ENCODE measurements at regions of chr18 and their contacts with region 1.

Region 1: GRCh38 chr18:11937874-11938478 is 29.9 kb upstream of the MPPE1 start:
- DNase-seq: peak; percentile 86
- ATAC-seq: peak; percentile 51
- H3K4me3 Mint-ChIP-seq: no peak overlapping the region
- H3K27ac Mint-ChIP-seq: no peak overlapping the region
- H3K4me1 Mint-ChIP-seq: no peaks in the 10 kb centered on the region
- H3K27me3 Mint-ChIP-seq: no peaks in the 10 kb centered on the region

Region 2: DNA sequence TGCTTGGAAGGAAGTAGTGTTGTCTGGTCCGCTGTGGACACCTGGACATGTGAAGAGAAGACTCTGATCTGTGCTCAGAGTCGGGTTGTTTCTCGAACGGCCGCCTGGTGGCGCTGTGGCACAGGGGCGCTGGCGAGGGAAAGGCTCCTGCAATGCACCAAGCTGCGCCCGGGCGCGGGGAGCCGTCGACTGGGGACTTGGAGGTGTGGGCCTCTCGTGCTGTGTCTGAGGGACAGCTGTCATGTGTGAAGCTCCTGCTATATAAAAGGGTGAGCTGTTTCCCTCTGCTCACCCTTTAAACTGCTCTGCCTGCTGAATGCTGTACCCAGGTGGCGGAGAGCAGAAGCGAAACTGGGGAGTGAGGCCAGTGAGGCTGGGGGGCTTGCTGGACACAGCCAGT is 204.9 kb before region 1 on chr18:
- CTCF ChIA-PET with region 1: interaction called, 4 read pairs
- POLR2A ChIA-PET with region 1: no interaction called
- intact Hi-C with region 1: loop called (anchors 1 to 10 kb)
- DNase-seq: peak; percentile 84
- ATAC-seq: peak; percentile 83
- H3K4me3 Mint-ChIP-seq: no peak overlapping the region
- H3K27ac Mint-ChIP-seq: no peak overlapping the region
- H3K4me1 Mint-ChIP-seq: no peaks in the 10 kb centered on the region
- H3K27me3 Mint-ChIP-seq: peaks cover 35% of the 10 kb centered on the region

Region 3: DNA sequence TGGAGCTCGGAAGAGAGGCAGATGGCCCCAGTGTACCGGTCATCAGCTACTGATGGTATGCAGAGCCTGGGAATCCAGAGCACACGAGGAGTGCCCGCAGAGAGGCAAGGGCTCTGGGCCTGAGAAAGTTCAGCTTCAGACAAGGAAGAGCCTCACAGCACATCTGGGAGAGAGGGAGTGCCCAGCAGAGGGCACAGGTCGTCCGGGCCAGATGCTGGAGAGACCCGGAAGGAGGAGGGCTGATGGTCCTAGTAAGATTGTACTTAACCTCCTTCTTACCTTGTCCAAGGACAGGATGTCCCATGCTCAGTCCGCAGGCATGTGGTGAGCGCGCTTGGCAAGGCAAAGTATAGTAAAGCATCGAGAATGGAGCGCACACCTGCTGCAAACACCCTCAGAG is 111.1 kb before region 1 on chr18:
- CTCF ChIA-PET with region 1: no interaction called
- POLR2A ChIA-PET with region 1: no interaction called
- intact Hi-C with region 1: no loop called
- DNase-seq: no peak
- ATAC-seq: no peak
- H3K4me3 Mint-ChIP-seq: no peak overlapping the region
- H3K27ac Mint-ChIP-seq: no peak overlapping the region
- H3K4me1 Mint-ChIP-seq: peaks cover 6% of the 10 kb centered on the region
- H3K27me3 Mint-ChIP-seq: peaks cover 3% of the 10 kb centered on the region

Region 4: DNA sequence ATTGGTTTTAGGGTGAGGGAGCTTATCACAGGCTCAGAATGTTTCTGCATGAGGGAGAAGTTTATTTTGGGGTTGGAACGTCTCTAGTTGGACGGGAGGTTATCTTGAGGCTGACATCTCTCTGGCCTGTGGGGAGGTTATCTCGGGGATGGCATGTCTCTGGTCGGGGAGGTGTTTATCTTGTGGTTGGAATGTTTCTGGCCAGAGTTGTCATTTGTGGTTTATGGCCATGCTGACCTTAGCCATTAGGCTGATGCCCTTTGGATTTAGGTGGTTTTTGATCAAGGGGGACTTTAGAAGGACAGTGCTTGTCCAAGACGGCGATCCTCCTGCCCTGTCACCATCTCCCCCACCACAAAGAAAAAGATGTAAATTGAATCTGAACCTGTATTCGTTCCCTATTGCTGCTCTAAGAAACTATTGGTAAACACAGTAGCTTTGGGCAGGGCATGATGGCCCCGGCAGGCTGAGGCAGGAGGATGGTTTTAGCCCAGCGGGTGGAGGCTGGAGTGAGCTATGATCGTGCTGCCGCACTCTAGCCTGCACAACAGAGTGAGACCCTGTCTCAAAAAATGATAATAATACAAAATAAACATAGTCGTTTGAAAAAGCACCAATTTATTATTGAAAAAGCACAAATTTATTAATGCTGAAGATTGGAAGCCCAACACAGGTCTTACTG is 12.0 kb before region 1 on chr18:
- CTCF ChIA-PET with region 1: interaction called, 18 read pairs
- POLR2A ChIA-PET with region 1: no interaction called
- intact Hi-C with region 1: no loop called
- DNase-seq: no peak
- ATAC-seq: no peak
- H3K4me3 Mint-ChIP-seq: no peak overlapping the region
- H3K27ac Mint-ChIP-seq: no peak overlapping the region
- H3K4me1 Mint-ChIP-seq: peaks cover 4% of the 10 kb centered on the region
- H3K27me3 Mint-ChIP-seq: no peaks in the 10 kb centered on the region

Region 5: GRCh38 chr18:11995445-11996189 is 57.6 kb after region 1 on chr18:
- CTCF ChIA-PET with region 1: interaction called, 144 read pairs
- POLR2A ChIA-PET with region 1: no interaction called
- intact Hi-C with region 1: loop called (anchors 1 kb)
- DNase-seq: peak; percentile 75
- ATAC-seq: peak; percentile 97
- H3K4me3 Mint-ChIP-seq: no peak overlapping the region
- H3K27ac Mint-ChIP-seq: no peak overlapping the region
- H3K4me1 Mint-ChIP-seq: peaks cover 7% of the 10 kb centered on the region
- H3K27me3 Mint-ChIP-seq: no peaks in the 10 kb centered on the region

Region 6: DNA sequence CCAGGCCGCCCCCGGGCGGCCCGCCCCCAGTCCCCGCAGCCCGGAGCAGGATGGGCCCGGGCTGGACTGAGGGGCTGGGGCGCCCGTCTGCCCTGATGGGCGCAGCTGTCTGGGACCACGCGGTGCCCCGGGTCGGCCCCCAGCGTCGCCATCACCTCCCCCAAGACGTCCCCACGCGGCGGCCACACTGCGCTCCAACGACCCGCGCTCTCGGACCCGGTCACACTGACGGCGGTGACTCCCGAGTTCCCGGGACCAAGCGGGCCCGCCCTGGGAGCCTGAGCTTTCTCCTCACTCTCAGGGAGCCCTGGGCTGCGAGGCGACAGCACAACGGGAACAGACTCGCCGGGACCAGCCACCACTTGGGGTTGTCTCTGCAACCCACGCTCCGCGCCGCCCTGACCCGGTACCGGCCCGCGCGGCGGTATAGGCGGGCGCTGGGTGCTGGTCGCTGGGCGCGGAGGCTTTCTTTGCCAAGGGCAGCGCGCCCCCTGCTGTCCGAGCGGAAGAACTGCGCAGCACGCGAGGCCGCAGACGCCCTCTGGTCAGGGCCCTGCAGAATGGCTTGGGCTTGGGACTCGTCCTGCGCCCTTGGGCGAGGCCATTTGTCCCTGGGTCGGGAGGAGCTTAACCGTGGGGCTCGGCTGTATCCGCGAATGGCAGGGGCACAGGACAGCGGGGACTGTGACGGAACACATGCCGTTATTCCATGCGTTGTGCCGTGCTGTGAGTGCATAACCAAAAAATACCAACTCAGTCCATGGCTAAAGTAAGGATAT is 100.9 kb after region 1 on chr18:
- CTCF ChIA-PET with region 1: interaction called, 70 read pairs
- POLR2A ChIA-PET with region 1: no interaction called
- intact Hi-C with region 1: loop called (anchors 1 kb)
- DNase-seq: peak; percentile 85
- ATAC-seq: peak; percentile 78
- H3K4me3 Mint-ChIP-seq: peak overlapping the region; percentile 43
- H3K27ac Mint-ChIP-seq: no peak overlapping the region
- H3K4me1 Mint-ChIP-seq: peaks cover 12% of the 10 kb centered on the region
- H3K27me3 Mint-ChIP-seq: peaks cover 14% of the 10 kb centered on the region

Region 7: GRCh38 chr18:12236934-12237832 is 299.2 kb after region 1 on chr18:
- CTCF ChIA-PET with region 1: interaction called, 4 read pairs
- POLR2A ChIA-PET with region 1: no interaction called
- intact Hi-C with region 1: loop called in 1 of 2 experiments (anchors 5 kb)
- DNase-seq: peak; percentile 86
- ATAC-seq: peak; percentile 98
- H3K4me3 Mint-ChIP-seq: no peak overlapping the region
- H3K27ac Mint-ChIP-seq: no peak overlapping the region
- H3K4me1 Mint-ChIP-seq: no peaks in the 10 kb centered on the region
- H3K27me3 Mint-ChIP-seq: peaks cover 36% of the 10 kb centered on the region

Measured in activated CD4-positive, alpha-beta T cell treated with anti-CD3 and anti-CD28 coated beads for 36 hours (primary cell).